Endothelial cell of umbilical vein (primary cell): ENCODE measurements at regions of chr1 and their contacts with region 1.

Region 1: DNA sequence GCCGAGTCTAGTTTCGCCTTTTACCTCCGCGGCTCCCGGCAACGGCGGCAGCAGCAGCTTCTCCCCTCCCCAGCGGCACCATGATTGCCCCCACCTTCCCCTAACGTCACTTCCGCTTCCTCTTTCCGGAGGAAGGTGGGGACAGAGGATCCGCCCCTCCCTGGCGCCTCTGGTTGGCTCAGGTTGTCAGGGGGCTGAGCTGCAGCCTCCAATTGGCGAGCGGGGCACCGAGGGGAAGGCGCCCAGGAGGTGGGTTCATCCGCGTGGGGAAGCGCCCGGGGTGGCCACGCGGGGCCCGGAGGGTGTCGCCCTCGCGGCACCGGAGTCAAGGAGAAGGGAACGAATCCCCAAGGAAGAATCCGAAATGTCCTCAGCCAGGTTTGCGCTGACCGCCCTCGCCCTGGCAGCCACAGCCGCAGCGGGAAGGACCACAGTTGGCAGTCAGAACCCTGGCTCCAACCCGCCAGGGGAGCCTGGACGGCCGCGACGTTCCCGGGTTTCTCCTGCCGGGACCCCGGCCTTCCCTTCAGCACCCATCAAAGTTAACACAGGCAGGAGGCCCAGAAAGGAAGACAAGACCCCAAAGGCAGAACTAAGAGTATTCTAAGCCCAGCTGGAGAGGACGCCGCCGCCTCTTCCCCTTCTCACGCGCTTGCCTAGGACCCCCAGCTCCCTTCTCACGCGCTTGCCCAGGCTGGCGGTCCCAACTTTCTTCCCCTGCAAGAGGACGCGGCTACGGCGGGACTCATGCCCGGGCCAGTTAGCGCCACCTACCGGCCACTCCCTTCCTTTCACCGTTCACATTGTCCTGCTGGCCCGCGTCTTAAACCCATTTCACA is at the start of gene MTF1:
- DNase-seq: peak; percentile 97
- H3K4me3 ChIP-seq: peak within 1 kb of the TSS; percentile 58 to 89 (median 87)
- H3K27ac ChIP-seq: peak within 1 kb of the TSS; percentile 78
- H3K4me1 ChIP-seq: peaks cover 11% of the 10 kb centered on the region
- H3K27me3 ChIP-seq: no peaks in the 10 kb centered on the region
- CTCF ChIP-seq: peak; percentile 93 to 96
- POLR2A ChIP-seq: peak; percentile 76
- total RNA-seq, gene MTF1: 18.5 and 18.9 TPM in 2 replicates

Region 2: DNA sequence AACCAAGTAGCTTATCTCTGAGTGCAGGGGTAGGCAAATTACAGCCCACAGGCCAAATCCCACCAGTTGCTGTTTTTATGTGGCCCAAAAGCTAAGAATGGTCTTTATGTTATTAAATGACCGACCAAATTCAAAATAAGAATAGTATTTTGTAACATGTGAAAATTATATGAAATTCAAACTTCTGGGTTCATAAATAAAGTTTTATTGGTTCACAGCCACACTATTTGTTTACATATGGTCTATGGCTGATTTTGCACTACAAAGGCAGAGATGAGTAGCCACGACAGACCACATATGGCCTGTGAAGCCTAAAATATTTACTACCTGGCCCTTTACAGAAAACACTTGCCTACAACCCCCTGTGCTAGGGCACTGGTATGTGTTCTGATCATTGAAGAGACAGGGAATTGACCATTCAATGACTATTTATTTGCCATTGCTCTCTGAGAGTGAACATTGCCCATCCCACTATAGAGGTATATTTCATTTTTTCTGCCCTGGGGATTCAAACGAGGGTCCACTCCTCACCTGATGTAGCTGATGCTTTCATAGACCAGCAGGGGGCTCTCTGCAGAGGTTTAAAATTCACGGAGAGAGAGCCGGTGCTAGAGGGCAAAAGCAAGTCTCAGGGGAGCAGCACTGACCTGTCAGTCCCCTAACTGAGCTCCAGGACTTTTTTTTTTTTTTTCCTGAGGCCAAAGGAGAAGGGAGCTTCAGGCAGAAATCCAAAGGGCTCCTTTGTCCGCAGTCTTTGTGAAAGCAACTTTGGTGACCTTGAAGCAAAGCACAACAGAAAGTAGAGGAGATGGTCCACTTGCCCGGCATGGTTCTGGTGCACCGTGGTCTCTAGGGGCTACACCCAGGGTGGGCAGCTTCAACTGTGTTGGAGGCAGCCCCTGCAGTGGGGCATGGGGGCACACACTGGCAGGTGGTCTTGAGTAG is 256.7 kb before region 1 on chr1:
- CTCF ChIA-PET with region 1: interaction called, 3 read pairs
- POLR2A ChIA-PET with region 1: no interaction called
- dilution Hi-C with region 1: no loop called
- intact Hi-C with region 1: loop called (anchors 1 kb)
- DNase-seq: peak; percentile 20
- H3K4me3 ChIP-seq: no peak overlapping the region
- H3K27ac ChIP-seq: no peak overlapping the region
- H3K4me1 ChIP-seq: no peaks in the 10 kb centered on the region
- H3K27me3 ChIP-seq: peaks cover 8 to 24% of the 10 kb centered on the region in 2 experiments
- CTCF ChIP-seq: peak; percentile 67
- POLR2A ChIP-seq: no peak

Region 3: DNA sequence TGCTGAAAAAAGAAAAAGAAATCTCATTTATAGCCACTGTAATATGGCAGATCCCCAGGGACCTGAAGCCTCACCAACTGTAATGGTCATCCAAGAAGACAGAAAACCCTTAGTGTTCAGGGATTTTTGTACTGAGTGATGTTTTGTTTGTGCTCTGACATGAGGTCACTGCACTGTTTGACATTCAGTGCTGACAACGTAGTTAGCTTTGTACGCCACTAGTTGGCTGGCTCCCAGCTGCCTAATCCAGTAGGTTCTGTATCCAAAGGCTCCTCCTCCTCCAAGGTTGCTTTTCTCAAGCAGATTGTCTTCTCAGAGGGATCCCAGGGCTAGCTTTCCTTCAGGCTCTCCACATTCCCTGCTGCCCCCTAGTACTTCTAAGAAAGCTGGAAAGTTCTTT is 42.2 kb before region 1 on chr1:
- CTCF ChIA-PET with region 1: interaction called, 16 read pairs
- POLR2A ChIA-PET with region 1: interaction called, 4 read pairs
- dilution Hi-C with region 1: no loop called
- intact Hi-C with region 1: no loop called
- DNase-seq: no peak
- H3K4me3 ChIP-seq: no peak overlapping the region
- H3K27ac ChIP-seq: no peak overlapping the region
- H3K4me1 ChIP-seq: no peaks in the 10 kb centered on the region
- H3K27me3 ChIP-seq: no peaks in the 10 kb centered on the region
- CTCF ChIP-seq: no peak
- POLR2A ChIP-seq: no peak

Region 4: DNA sequence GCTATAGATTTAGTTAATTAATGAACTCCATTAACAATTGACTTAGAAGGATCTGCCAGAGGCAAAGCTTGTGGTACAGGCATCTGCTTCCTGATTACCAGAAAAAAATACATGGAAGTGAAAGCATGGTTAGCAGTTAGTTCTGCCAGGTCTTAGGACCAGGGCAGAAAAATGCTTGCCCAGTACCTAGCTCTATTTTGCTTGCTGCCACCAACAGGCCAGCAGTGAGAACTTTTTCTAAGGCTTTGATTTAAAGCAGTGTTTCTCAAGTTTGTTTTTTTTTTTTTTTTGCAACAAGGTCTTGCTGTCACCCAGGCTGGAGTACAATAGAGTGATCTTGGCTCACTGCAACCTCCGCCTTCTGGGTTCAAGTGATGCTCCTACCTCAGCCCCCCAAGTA is 16.1 kb after region 1 on chr1:
- CTCF ChIA-PET with region 1: interaction called, 16 read pairs
- POLR2A ChIA-PET with region 1: no interaction called
- dilution Hi-C with region 1: no loop called
- intact Hi-C with region 1: no loop called
- DNase-seq: peak; percentile 17
- H3K4me3 ChIP-seq: no peak overlapping the region
- H3K27ac ChIP-seq: no peak overlapping the region
- H3K4me1 ChIP-seq: no peaks in the 10 kb centered on the region
- H3K27me3 ChIP-seq: no peaks in the 10 kb centered on the region
- CTCF ChIP-seq: peak in 1 of 2 donors; percentile 20
- POLR2A ChIP-seq: no peak

Region 5: DNA sequence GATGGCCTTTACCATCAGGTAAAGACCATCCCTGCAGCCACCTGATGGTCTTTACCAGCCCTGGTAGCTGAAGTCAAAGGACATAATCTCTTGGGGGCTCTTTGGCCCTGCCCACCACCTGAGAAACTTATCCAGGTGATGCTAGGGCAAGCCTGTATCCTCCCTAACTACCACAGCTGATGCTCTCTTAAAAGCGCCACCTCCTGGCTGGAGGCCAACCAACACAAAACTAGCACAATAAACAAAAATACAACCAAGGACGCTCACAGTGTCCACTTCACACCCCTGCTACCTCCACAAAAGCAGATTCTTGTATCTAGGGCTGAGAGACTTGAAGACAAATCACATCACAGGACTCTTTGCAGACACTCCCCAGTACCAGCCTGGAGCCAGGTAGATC is 543.9 kb after region 1 on chr1:
- CTCF ChIA-PET with region 1: no interaction called
- POLR2A ChIA-PET with region 1: no interaction called
- dilution Hi-C with region 1: no loop called
- intact Hi-C with region 1: no loop called
- DNase-seq: no peak
- H3K4me3 ChIP-seq: no peak overlapping the region
- H3K27ac ChIP-seq: no peak overlapping the region
- H3K4me1 ChIP-seq: no peaks in the 10 kb centered on the region
- H3K27me3 ChIP-seq: no peaks in the 10 kb centered on the region
- CTCF ChIP-seq: no peak
- POLR2A ChIP-seq: no peak

Region 6: GRCh38 chr1:38624336-38625039 is 764.8 kb after region 1 on chr1:
- CTCF ChIA-PET with region 1: no interaction called
- POLR2A ChIA-PET with region 1: no interaction called
- dilution Hi-C with region 1: no loop called
- intact Hi-C with region 1: no loop called
- DNase-seq: no peak
- H3K4me3 ChIP-seq: no peak overlapping the region
- H3K27ac ChIP-seq: no peak overlapping the region
- H3K4me1 ChIP-seq: no peaks in the 10 kb centered on the region
- H3K27me3 ChIP-seq: no peaks in the 10 kb centered on the region
- CTCF ChIP-seq: no peak
- POLR2A ChIP-seq: no peak